ENCODE measurements at regions of chr4 and their contacts with region 1.

Region 1: GRCh38 chr4:22090661-22091351 is 142.2 kb upstream of the KCNIP4 start:
- DNase-seq: no peak
- ATAC-seq: no peak
- H3K4me3 Mint-ChIP-seq: no peak overlapping the region
- H3K27ac Mint-ChIP-seq: no peak overlapping the region
- H3K4me1 Mint-ChIP-seq: no peaks in the 10 kb centered on the region
- H3K27me3 Mint-ChIP-seq: 0 out of 2 replicates have a peak, but pooled peaks cover 2% of the 10 kb centered on the region
- CTCF ChIP-seq: no peak

Region 2: DNA sequence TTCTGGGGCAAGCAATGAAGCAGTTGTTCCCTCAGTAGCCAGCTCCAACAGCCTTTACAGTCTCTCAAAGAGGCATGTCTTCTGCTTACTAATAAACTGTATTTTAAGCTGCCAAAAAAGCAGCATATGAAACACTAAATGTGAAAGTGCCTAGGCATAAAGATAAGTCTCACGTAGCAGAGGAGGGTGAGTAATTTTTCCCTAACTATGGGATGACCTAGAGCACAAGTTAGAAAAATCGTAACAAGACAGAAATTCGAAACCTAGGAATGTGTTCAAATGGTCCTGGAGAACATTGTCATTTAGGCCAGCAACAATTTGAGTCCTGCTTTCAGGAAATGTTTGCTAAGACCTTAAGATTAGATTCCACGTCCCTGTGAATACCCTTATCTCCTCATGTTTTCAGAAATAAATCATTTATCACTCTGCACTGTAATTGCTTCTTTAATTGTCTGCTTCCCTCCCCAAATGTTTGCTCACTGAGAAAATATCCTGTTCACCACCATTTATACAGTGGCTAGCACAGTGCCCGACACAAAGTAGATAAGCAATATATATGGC is 364.5 kb before region 1 on chr4:
- CTCF ChIA-PET with region 1: no interaction called
- POLR2A ChIA-PET with region 1: no interaction called
- DNase-seq: no peak
- ATAC-seq: no peak
- H3K4me3 Mint-ChIP-seq: no peak overlapping the region
- H3K27ac Mint-ChIP-seq: 0 out of 2 replicates have a peak overlapping the region, but pooled peaks have one; percentile 50
- H3K4me1 Mint-ChIP-seq: peaks cover 8% of the 10 kb centered on the region
- H3K27me3 Mint-ChIP-seq: no peaks in the 10 kb centered on the region
- CTCF ChIP-seq: no peak

Region 3: DNA sequence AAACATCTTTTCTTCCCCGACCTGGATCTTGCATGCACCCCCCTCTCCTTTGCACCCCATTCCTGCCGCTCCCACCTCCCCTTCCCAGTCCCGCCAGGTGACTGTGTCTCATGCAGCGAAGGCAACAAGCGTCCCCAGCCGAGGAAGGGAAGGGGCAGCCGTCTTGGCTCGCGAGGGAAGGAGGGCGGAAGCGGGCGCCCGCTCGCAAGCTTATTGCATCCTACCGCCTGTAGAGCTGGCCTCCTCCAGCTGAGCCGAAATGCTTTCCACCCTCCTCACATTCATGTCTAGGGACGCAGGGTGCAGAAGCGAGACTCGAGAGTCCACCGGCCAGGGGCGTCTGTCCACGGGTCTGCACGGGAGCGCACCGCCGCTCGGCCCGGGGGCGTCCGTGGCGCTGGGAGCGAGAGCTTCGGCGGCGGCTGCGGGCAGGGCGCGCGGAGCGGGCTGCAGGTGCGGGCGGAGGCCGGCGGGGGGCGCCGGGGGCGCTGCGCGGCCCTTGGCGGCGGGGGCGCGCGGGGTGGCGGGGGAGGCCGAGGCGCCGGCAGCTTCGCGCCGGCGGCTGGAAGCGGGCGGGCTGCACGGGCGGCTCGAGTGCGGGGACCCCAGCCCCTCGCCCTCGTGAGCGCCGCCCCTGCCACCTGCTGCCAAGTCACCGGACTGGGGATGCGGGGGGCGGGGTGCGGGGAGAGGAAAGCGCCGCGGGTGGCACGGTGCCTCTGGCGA is 142.3 kb before region 1 on chr4 and contains the start of gene KCNIP4:
- CTCF ChIA-PET with region 1: interaction called, 12 read pairs
- POLR2A ChIA-PET with region 1: no interaction called
- DNase-seq: peak; percentile 59
- ATAC-seq: peak; percentile 83
- H3K4me3 Mint-ChIP-seq: peak within 1 kb of the TSS; percentile 71
- H3K27ac Mint-ChIP-seq: no peak within 1 kb of the TSS
- H3K4me1 Mint-ChIP-seq: peaks cover 12% of the 10 kb centered on the region
- H3K27me3 Mint-ChIP-seq: peaks cover 44% of the 10 kb centered on the region
- CTCF ChIP-seq: no peak
- total RNA-seq, gene KCNIP4: not detected in 3 replicates

Region 4: DNA sequence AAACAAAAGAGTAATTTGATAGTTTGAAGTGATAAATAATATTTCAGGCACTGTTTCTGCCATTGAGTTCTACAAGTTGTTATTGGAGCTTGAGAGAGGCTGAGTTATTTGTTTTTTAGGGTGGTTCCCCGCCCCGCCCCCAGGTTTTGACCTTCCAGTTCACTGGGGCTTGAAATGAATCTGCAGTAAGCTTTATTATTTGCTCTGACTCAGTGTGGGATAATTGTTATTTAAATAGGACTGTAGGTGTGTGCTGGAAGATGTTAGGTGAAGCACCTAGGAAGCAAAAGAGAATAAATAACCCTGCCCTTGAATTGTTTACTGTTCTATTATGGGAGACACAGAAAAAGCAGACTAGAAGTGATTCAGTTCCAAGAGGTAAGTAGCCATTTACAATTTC is 61.0 kb before region 1 on chr4:
- CTCF ChIA-PET with region 1: no interaction called
- POLR2A ChIA-PET with region 1: no interaction called
- DNase-seq: no peak
- ATAC-seq: peak; percentile 81
- H3K4me3 Mint-ChIP-seq: no peak overlapping the region
- H3K27ac Mint-ChIP-seq: peak overlapping the region; percentile 31; the same call in 1 of the 2 replicates
- H3K4me1 Mint-ChIP-seq: peaks cover 22% of the 10 kb centered on the region
- H3K27me3 Mint-ChIP-seq: no peaks in the 10 kb centered on the region
- CTCF ChIP-seq: no peak

Region 5: GRCh38 chr4:22047793-22048192 is 43.0 kb before region 1 on chr4:
- CTCF ChIA-PET with region 1: no interaction called
- POLR2A ChIA-PET with region 1: no interaction called
- DNase-seq: no peak
- ATAC-seq: no peak
- H3K4me3 Mint-ChIP-seq: no peak overlapping the region
- H3K27ac Mint-ChIP-seq: no peak overlapping the region
- H3K4me1 Mint-ChIP-seq: no peaks in the 10 kb centered on the region
- H3K27me3 Mint-ChIP-seq: no peaks in the 10 kb centered on the region
- CTCF ChIP-seq: no peak

Measured in WTC11 (cell line).